ENCODE measurements at regions of chr2 and their contacts with region 1.

Region 1: DNA sequence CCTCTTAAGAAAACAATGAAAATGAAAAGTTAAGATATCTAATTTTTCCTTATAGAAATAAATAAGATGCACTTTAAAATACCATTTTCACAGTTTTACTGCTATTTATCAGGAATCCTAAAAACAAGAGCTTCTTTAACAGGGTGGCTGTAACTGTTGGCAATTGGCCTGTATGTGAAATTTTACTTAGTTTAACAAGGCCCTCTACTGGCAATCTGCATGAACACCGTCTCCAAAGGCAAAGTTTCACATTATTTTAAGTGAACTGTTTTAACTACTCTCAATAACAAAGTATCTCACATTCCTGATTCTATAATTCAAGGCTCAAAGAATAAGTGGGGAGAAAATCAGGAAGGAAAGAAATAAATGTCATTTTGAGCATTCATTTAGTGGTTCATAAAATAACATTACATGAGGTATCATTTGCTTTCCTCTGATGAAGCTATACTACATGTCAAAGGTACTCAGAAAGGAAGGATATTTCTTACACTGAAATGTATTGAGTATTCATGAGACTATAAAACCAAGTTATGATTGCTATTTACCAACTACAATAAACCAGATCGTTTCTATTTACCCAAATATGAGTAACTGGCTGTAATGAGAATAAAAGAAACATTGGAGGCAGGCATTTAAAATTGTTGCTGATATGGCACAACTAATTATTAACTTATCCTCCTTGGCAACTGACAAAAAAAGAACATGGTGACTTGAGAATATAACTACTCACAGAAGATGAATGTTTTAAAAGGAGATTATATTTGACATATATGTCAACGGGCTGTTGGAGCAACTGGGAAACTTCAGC is 7.0 kb downstream of the NCKAP5 start:
- DNase-seq: no peak
- H3K4me3 ChIP-seq: no peak overlapping the region
- H3K27ac ChIP-seq: no peak overlapping the region
- H3K4me1 ChIP-seq: no peaks in the 10 kb centered on the region; a peak in 1 of 7 replicates
- H3K27me3 ChIP-seq: peaks cover 0 to 1% (median 0%) of the 10 kb centered on the region in 4 experiments; a peak in 1 of 7 replicates
- CTCF ChIP-seq: peak in 2 of 3 experiments; percentile 56 to 64; a peak in 3 of 4 replicates
- EP300 ChIP-seq: no peak
- POLR2A ChIP-seq: no peak
- RAD21 ChIP-seq: peak; percentile 77 to 80

Region 2: DNA sequence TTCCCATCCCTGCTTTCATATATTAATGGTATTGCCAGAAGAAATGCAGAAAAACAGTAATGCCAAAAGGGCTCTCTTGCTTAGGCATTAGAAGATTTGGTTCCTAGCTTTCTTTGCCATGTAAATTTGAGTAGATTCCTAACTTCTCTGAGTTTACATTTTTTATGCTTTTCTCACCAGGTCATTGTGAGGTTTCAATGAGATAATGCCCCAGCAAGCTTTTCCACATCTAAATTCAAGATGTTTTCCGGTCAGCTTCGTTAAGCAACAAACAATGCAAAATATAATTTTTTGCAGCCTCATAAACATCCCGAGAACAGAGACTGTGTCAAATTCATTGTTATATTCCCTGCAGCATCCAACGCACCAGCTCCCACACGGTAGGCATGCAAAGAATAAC is 37.8 kb before region 1 on chr2:
- CTCF ChIA-PET with region 1: interaction called, 42 read pairs
- POLR2A ChIA-PET with region 1: no interaction called
- DNase-seq: no peak
- H3K4me3 ChIP-seq: no peak overlapping the region
- H3K27ac ChIP-seq: no peak overlapping the region
- H3K4me1 ChIP-seq: peaks cover 0 to 5% (median 1%) of the 10 kb centered on the region in 4 experiments; a peak in 2 of 7 replicates
- H3K27me3 ChIP-seq: peaks cover 17 to 37% (median 30%) of the 10 kb centered on the region in 4 experiments
- CTCF ChIP-seq: no peak
- EP300 ChIP-seq: no peak
- POLR2A ChIP-seq: no peak
- RAD21 ChIP-seq: no peak

Region 3: DNA sequence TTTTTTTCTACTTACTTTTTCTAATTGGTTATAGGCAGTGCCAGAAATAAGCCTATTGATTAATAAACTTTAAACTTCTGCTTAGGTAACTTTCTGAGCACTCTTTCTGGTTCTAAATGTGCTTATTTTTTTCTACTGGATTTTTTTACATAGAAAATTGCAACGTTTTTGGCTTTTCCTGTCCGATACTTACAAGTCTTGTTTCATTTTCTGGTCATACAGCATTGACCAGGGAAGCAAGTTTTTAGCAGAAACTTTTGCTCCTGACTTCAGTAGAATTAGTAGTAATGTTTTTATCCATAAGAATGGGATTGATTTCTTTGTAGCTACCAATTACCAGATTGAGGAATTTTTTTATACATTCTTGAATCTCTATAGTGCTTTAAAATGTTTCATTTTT is 29.9 kb before region 1 on chr2:
- CTCF ChIA-PET with region 1: interaction called, 13 read pairs
- POLR2A ChIA-PET with region 1: no interaction called
- DNase-seq: no peak
- H3K4me3 ChIP-seq: no peak overlapping the region
- H3K27ac ChIP-seq: no peak overlapping the region
- H3K4me1 ChIP-seq: no peaks in the 10 kb centered on the region
- H3K27me3 ChIP-seq: no peaks in the 10 kb centered on the region
- CTCF ChIP-seq: no peak
- EP300 ChIP-seq: no peak
- POLR2A ChIP-seq: no peak
- RAD21 ChIP-seq: no peak

Region 4: DNA sequence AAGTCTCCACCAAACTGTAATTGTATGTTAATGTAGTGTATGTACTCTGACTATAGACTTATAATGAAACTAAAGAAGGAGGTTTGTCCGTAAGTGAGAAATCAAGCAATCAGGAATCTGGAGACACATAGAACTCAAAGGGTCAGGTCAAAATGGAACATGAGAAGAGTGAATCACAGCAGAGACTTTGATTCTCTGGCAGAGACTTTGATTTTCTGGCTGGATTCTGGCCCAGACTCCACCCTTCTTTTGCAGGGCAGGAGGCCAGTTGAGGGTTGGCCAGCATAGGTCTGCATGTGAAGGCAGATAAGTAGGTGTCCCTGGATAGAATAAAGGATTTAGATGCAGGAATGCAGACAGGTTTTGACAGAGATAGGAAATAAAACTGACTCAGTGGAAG is 18.0 kb after region 1 on chr2:
- CTCF ChIA-PET with region 1: interaction called, 10 read pairs
- POLR2A ChIA-PET with region 1: no interaction called
- DNase-seq: no peak
- H3K4me3 ChIP-seq: no peak overlapping the region
- H3K27ac ChIP-seq: no peak overlapping the region
- H3K4me1 ChIP-seq: peaks cover 0 to 3% (median under 1%) of the 10 kb centered on the region in 4 experiments; a peak in 3 of 7 replicates
- H3K27me3 ChIP-seq: no peaks in the 10 kb centered on the region
- CTCF ChIP-seq: no peak
- EP300 ChIP-seq: no peak
- POLR2A ChIP-seq: no peak
- RAD21 ChIP-seq: no peak

Region 5: DNA sequence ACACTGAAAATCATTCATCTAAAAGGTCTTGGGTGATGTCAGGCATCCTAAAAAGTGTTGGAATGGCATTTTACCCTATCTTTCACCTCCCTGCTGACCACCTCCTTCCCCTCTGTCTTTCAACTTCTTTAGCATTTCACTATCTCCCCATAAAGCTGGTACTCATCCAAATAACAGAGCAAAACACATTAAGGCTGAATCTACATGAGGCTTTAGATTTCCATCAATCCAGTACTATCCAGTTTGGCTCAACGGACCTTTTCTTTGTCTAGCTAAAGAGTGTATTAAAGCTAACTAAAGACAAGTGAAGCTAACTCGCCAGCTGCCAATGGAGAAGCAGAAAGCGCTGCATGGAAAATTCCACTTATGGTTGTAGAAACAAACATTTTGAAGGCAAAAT is 129.5 kb after region 1 on chr2:
- CTCF ChIA-PET with region 1: no interaction called
- POLR2A ChIA-PET with region 1: no interaction called
- DNase-seq: no peak
- H3K4me3 ChIP-seq: no peak overlapping the region
- H3K27ac ChIP-seq: no peak overlapping the region
- H3K4me1 ChIP-seq: no peaks in the 10 kb centered on the region; a peak in 2 of 7 replicates
- H3K27me3 ChIP-seq: no peaks in the 10 kb centered on the region
- CTCF ChIP-seq: no peak
- EP300 ChIP-seq: no peak
- POLR2A ChIP-seq: no peak
- RAD21 ChIP-seq: no peak

Region 6: DNA sequence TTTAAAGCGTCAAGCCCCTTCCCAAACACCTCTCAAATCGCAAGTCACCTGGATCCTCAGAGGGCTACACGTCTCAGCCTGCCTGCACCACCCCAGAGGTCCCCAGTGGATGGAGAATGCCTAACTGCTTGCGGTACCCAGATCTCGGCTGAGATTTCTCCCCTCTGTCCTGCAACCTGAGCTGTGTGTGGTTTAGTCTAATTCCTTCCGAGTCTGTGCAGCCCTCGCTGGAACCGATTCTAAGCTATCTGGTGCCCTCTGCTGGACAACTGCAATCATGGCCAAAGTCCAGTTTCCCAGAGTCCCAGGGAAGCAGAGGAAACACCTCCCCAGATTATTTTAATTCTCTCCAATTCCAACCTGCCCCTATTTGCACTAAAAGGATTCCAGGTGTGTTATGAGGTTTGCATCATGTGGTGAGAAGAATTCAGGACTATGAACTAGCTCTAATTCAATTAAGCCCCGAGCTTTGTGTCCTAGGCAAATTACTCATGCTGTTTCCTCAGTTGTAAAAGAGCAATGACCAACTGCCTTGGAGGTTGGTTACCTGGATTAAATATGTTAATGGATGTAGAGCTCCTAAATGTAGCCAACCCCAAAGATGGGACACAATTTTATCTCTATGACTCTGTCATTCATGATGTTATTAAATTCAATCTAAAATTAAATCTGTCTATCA is 283.1 kb after region 1 on chr2:
- CTCF ChIA-PET with region 1: interaction called, 24 read pairs
- POLR2A ChIA-PET with region 1: no interaction called
- DNase-seq: peak; percentile 19 to 82
- H3K4me3 ChIP-seq: no peak overlapping the region
- H3K27ac ChIP-seq: no peak overlapping the region
- H3K4me1 ChIP-seq: no peaks in the 10 kb centered on the region
- H3K27me3 ChIP-seq: no peaks in the 10 kb centered on the region; a peak in 1 of 7 replicates
- CTCF ChIP-seq: peak; percentile 77 to 84 (median 82)
- EP300 ChIP-seq: no peak
- POLR2A ChIP-seq: no peak
- RAD21 ChIP-seq: peak; percentile 97 to 98

Region 7: GRCh38 chr2:134079373-134079772 is 518.1 kb after region 1 on chr2:
- CTCF ChIA-PET with region 1: no interaction called
- POLR2A ChIA-PET with region 1: no interaction called
- DNase-seq: no peak
- H3K4me3 ChIP-seq: no peak overlapping the region
- H3K27ac ChIP-seq: no peak overlapping the region
- H3K4me1 ChIP-seq: peaks cover 1 to 12% (median 8%) of the 10 kb centered on the region in 4 experiments; a peak in 3 of 7 replicates
- H3K27me3 ChIP-seq: no peaks in the 10 kb centered on the region
- CTCF ChIP-seq: no peak
- EP300 ChIP-seq: no peak
- POLR2A ChIP-seq: no peak
- RAD21 ChIP-seq: no peak

Measured in H1 (cell line).